CD4-positive, alpha-beta memory T cell (primary cell): ENCODE measurements at regions of chr1 and their contacts with region 1.

Region 1: DNA sequence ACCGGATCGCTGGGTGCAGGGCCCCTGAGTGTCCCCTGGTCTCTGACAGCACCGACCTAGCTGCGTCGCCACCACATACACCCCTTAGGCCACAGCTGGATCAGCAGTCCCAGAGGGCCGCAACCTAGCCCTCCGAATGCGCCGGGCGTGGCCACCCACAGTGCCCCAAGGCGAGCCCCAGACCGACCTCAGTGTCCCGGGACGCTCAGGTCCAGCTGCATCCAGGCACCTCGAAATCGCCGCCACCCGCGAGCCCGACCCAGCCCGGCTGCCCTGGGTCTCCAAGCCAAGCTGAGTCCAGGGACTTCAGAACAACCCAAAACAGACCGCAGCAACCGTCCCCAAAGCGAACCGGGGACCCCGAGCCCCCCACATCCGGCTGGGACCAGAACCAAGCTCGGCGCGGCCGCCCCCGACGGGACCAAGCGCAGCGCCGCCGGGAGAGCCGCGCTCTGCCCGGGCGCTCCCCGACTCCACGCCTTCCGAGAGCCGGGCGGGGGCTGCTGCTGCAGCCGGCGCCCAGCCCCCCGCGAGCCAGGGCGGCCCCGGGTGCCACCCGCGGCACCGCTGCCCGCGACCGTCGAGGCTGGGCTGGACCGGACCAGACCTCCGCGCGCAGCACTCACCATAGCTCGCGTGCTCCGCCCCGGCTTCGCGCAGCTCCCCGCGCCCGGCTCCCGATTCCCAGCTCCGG is 54.6 kb upstream of the ECE1 start:
- DNase-seq: peak in 1 of 5 donors; percentile 48
- H3K4me3 ChIP-seq: peak overlapping the region; percentile 57 to 80
- H3K4me3 Mint-ChIP-seq: peak overlapping the region; percentile 79 to 92 (median 90)
- H3K27ac ChIP-seq: peak overlapping the region; percentile 59
- H3K27ac Mint-ChIP-seq: peak overlapping the region; percentile 85 to 93 (median 90)
- H3K4me1 ChIP-seq: peaks cover 53% of the 10 kb centered on the region
- H3K4me1 Mint-ChIP-seq: peaks cover 31 to 48% (median 40%) of the 10 kb centered on the region in 4 donors
- H3K27me3 ChIP-seq: no peaks in the 10 kb centered on the region
- H3K27me3 Mint-ChIP-seq: no peaks in the 10 kb centered on the region

Region 2: GRCh38 chr1:21324368-21325141 is 20.3 kb before region 1 on chr1:
- CTCF ChIA-PET with region 1: interaction called, 7 read pairs
- POLR2A ChIA-PET with region 1: interaction called, 29 read pairs
- intact Hi-C with region 1: loop called (anchors 2 kb)
- DNase-seq: peak; percentile 24 to 82 (median 48)
- H3K4me3 ChIP-seq: peak overlapping the region; percentile 9 to 25
- H3K4me3 Mint-ChIP-seq: peak overlapping the region; percentile 65 to 93 (median 84)
- H3K27ac ChIP-seq: peak overlapping the region; percentile 36
- H3K27ac Mint-ChIP-seq: peak overlapping the region; percentile 92 to 96 (median 94)
- H3K4me1 ChIP-seq: peaks cover 71% of the 10 kb centered on the region
- H3K4me1 Mint-ChIP-seq: peaks cover 41 to 95% (median 75%) of the 10 kb centered on the region in 4 donors
- H3K27me3 ChIP-seq: no peaks in the 10 kb centered on the region
- H3K27me3 Mint-ChIP-seq: no peaks in the 10 kb centered on the region

Region 3: DNA sequence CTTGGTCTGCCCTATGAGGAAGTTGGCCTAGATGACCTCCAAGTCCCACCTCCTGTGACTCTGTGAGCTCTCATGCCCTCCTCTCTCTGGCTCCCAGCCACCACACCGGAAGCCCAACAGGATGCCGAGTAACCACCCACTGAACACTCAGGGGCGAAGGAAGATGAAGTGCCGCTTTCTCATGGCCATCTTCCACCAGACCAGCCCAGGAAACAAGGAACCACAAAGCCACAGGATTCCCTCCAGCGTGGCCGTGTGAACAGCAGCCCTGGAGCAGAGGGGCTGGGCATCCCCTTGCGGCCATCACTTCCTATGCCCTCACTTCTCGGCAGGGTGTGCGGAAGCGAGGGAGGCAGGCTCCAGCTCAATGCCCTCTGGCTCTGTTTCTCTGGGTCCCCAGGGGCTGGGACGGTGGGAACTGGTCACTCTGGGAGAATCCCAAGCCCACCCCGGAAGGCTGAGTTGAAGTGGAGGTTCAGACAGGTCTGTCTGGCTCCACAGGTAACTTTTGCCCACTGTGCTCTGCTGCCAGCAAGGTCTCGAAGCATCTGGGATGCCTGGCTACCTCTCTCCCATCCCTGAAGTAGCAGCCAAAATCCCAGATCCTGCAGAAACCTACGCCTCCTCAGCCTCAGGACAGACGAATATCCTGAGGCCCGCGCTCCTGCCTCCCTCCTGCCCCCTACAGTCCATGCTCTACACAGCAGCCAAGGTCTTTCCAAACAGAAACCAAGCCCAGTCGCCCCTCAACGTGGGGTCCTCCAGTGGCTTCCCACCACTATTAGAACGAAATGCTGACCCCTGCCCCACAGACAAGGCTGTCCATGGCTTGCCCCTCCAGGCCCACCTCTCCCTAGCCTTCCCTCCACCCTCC is 10.4 kb before region 1 on chr1:
- CTCF ChIA-PET with region 1: interaction called, 12 read pairs
- POLR2A ChIA-PET with region 1: interaction called, 52 read pairs
- intact Hi-C with region 1: loop called (anchors 1 kb)
- DNase-seq: peak; percentile 87 to 93 (median 89)
- H3K4me3 ChIP-seq: peak overlapping the region; percentile 17 to 44
- H3K4me3 Mint-ChIP-seq: peak overlapping the region; percentile 80 to 94 (median 90)
- H3K27ac ChIP-seq: peak overlapping the region; percentile 82
- H3K27ac Mint-ChIP-seq: peak overlapping the region; percentile 92 to 99 (median 98)
- H3K4me1 ChIP-seq: peaks cover 94% of the 10 kb centered on the region
- H3K4me1 Mint-ChIP-seq: peaks cover 62 to 98% (median 81%) of the 10 kb centered on the region in 4 donors
- H3K27me3 ChIP-seq: no peaks in the 10 kb centered on the region
- H3K27me3 Mint-ChIP-seq: no peaks in the 10 kb centered on the region

Region 4: GRCh38 chr1:21414015-21414414 is 69.1 kb after region 1 on chr1:
- CTCF ChIA-PET with region 1: no interaction called
- POLR2A ChIA-PET with region 1: no interaction called
- intact Hi-C with region 1: no loop called
- DNase-seq: no peak
- H3K4me3 ChIP-seq: no peak overlapping the region
- H3K4me3 Mint-ChIP-seq: no peak overlapping the region
- H3K27ac ChIP-seq: no peak overlapping the region
- H3K27ac Mint-ChIP-seq: no peak overlapping the region
- H3K4me1 ChIP-seq: no peaks in the 10 kb centered on the region
- H3K4me1 Mint-ChIP-seq: no peaks in the 10 kb centered on the region
- H3K27me3 ChIP-seq: no peaks in the 10 kb centered on the region
- H3K27me3 Mint-ChIP-seq: peaks cover 4 to 16% of the 10 kb centered on the region in 2 donors